ENCODE measurements at regions of chr1 and their contacts with region 1.

Region 1: GRCh38 chr1:172745014-172745413 is 86.1 kb downstream of the FASLG start:
- DNase-seq: no peak
- ATAC-seq: peak; percentile 50 to 82 (median 78)
- H3K4me3 ChIP-seq: no peak overlapping the region
- H3K27ac ChIP-seq: no peak overlapping the region
- H3K4me1 ChIP-seq: peaks cover 0 to 26% (median 3%) of the 10 kb centered on the region in 12 donors
- H3K27me3 ChIP-seq: peaks cover 0 to 15% (median 0%) of the 10 kb centered on the region in 9 donors
- CTCF ChIP-seq: peak; percentile 25 to 64 (median 56)
- POLR2A ChIP-seq: no peak

Region 2: GRCh38 chr1:171919891-171920887 is 824.8 kb before region 1 on chr1:
- intact Hi-C with region 1: no loop called
- DNase-seq: no peak
- ATAC-seq: no peak
- H3K4me3 ChIP-seq: no peak overlapping the region
- H3K27ac ChIP-seq: no peak overlapping the region
- H3K4me1 ChIP-seq: peaks cover 0 to 11% (median 0%) of the 10 kb centered on the region in 12 donors
- H3K27me3 ChIP-seq: no peaks in the 10 kb centered on the region
- CTCF ChIP-seq: no peak
- POLR2A ChIP-seq: no peak

Region 3: GRCh38 chr1:172719694-172720138 is 25.3 kb before region 1 on chr1:
- intact Hi-C with region 1: no loop called
- DNase-seq: no peak
- ATAC-seq: peak in 1 of 4 donors; percentile 58
- H3K4me3 ChIP-seq: no peak overlapping the region
- H3K27ac ChIP-seq: no peak overlapping the region
- H3K4me1 ChIP-seq: peaks cover 0 to 16% (median 0%) of the 10 kb centered on the region in 12 donors
- H3K27me3 ChIP-seq: no peaks in the 10 kb centered on the region
- CTCF ChIP-seq: peak; percentile 61 to 79 (median 70)
- POLR2A ChIP-seq: no peak

Region 4: GRCh38 chr1:172826096-172826743 is 81.2 kb after region 1 on chr1:
- intact Hi-C with region 1: loop called in 4 of 10 experiments (anchors 5 to 10 kb)
- DNase-seq: peak in 1 of 5 donors; percentile 25
- ATAC-seq: peak; percentile 83 to 94 (median 88)
- H3K4me3 ChIP-seq: peak overlapping the region in 8 of 12 donors; percentile 11 to 28 (median 20)
- H3K27ac ChIP-seq: peak overlapping the region; percentile 2 to 78 (median 60)
- H3K4me1 ChIP-seq: peaks cover 0 to 31% (median 4%) of the 10 kb centered on the region in 12 donors
- H3K27me3 ChIP-seq: no peaks in the 10 kb centered on the region
- CTCF ChIP-seq: peak; percentile 41 to 75 (median 59)
- POLR2A ChIP-seq: no peak

Region 5: DNA sequence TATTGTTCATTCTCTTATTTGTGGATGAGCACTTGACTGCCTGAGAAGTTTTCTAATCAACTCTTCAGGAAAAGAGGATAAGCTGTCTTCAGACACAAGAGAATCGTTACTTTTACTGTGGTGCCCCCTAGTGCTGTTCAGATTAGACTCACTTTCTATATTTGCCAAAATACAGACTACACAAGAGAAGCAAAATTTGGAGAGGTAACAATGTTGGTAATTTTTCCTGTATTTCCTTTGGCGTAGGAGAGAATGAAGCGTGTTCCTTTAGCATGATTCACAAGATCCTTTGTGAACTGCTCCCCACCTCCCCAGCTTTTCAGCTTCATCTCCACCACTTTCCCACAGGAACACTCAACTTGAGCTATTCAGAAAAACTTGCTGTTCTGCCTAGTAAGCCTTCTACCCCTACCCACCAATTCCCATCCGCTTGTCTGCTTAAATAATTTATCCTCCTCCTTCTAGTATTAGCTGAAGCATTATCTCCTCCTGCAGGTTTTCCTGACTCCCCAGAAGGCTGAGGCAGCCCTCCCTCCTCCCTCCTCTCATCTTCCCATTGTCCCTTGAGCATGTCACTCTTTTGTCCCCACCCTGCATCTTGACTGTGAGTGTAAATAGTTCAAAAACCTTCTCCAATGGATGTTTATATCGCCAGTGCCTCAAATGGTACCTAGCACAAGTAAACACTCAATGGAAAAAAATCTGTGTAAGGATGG is 457.6 kb after region 1 on chr1:
- intact Hi-C with region 1: loop called (anchors 1 to 5 kb)
- DNase-seq: peak in 2 of 5 donors; percentile 18 to 27
- ATAC-seq: peak; percentile 49 to 79 (median 76)
- H3K4me3 ChIP-seq: no peak overlapping the region
- H3K27ac ChIP-seq: no peak overlapping the region
- H3K4me1 ChIP-seq: peaks cover 0 to 34% (median 10%) of the 10 kb centered on the region in 12 donors
- H3K27me3 ChIP-seq: no peaks in the 10 kb centered on the region
- CTCF ChIP-seq: peak; percentile 42 to 79 (median 65)
- POLR2A ChIP-seq: no peak

Region 6: GRCh38 chr1:173409613-173410012 is 664.6 kb after region 1 on chr1:
- intact Hi-C with region 1: loop called in 3 of 10 experiments (anchors 10 kb)
- DNase-seq: peak; percentile 51 to 71 (median 56)
- ATAC-seq: peak in 3 of 4 donors; percentile 63 to 65 (median 64)
- H3K4me3 ChIP-seq: no peak overlapping the region
- H3K27ac ChIP-seq: no peak overlapping the region
- H3K4me1 ChIP-seq: peaks cover 0 to 54% (median 18%) of the 10 kb centered on the region in 12 donors
- H3K27me3 ChIP-seq: no peaks in the 10 kb centered on the region
- CTCF ChIP-seq: no peak
- POLR2A ChIP-seq: no peak

Region 7: GRCh38 chr1:173420330-173420806 is 675.4 kb after region 1 on chr1:
- intact Hi-C with region 1: loop called in 6 of 10 experiments (anchors 5 to 10 kb)
- DNase-seq: peak in 4 of 5 donors; percentile 40 to 56 (median 49)
- ATAC-seq: peak; percentile 32 to 86 (median 82)
- H3K4me3 ChIP-seq: peak overlapping the region in 1 of 12 donors; percentile 9
- H3K27ac ChIP-seq: peak overlapping the region in 3 of 12 donors; percentile 26 to 33 (median 33)
- H3K4me1 ChIP-seq: peaks cover 0 to 24% (median 0%) of the 10 kb centered on the region in 12 donors
- H3K27me3 ChIP-seq: no peaks in the 10 kb centered on the region
- CTCF ChIP-seq: peak; percentile 83 to 97 (median 92)
- POLR2A ChIP-seq: no peak

Region 8: DNA sequence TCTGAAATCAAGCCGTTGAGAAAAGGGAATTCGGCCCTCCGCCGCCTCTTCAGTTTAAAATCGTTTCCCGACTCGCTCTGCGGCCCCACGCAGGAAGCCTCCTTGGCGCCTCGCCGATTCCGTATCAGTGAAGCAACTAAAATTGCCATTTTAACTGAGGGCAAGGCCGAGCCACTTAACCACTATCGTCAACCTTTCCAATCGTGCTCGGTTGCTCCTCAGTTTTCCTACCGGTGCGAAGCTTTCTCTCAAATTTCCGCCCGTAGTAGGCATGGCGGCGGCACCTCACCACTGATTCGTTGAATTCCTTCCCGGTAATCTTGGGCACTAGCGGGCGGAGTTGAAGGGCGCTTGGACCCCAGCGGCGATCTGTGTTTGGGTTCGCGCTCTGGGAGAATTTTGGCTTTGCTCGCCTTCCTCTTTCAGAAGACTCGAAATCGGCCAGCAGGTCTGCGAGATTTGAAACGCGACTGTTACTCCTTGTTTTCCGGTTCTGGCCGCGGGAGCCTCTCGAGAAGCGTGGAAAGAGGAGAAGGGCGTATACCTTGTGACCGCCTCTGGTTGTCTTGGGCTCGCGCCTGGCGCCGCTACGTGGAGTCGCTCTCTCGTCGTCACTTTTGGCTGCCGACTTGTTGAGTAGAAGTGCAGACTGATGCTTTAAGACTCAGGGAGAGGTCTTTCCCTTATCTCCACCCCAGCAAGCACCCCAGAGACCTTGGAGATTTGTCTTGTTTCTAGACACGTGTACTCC is 1079.5 kb after region 1 on chr1 and contains the starts of genes CENPL and DARS2:
- intact Hi-C with region 1: loop called in 6 of 10 experiments (anchors 5 to 10 kb)
- DNase-seq: peak; percentile 96 to 99 (median 96)
- ATAC-seq: peak; percentile 98 to 99 (median 99)
- H3K4me3 ChIP-seq: peak within 1 kb of the TSS; percentile 58 to 98 (median 78)
- H3K27ac ChIP-seq: peak within 1 kb of the TSS; percentile 87 to 97 (median 93)
- H3K4me1 ChIP-seq: peaks cover 0 to 29% (median 8%) of the 10 kb centered on the region in 12 donors
- H3K27me3 ChIP-seq: no peaks in the 10 kb centered on the region
- CTCF ChIP-seq: no peak
- POLR2A ChIP-seq: peak in 1 of 2 donors; percentile 21
- total RNA-seq, gene CENPL: 1.7 to 5.8 (median 3.5) TPM
- total RNA-seq, gene DARS2: 10.9 to 25.1 (median 15.9) TPM